ENCODE measurements at regions of chr5 and their contacts with region 1.

Region 1: DNA sequence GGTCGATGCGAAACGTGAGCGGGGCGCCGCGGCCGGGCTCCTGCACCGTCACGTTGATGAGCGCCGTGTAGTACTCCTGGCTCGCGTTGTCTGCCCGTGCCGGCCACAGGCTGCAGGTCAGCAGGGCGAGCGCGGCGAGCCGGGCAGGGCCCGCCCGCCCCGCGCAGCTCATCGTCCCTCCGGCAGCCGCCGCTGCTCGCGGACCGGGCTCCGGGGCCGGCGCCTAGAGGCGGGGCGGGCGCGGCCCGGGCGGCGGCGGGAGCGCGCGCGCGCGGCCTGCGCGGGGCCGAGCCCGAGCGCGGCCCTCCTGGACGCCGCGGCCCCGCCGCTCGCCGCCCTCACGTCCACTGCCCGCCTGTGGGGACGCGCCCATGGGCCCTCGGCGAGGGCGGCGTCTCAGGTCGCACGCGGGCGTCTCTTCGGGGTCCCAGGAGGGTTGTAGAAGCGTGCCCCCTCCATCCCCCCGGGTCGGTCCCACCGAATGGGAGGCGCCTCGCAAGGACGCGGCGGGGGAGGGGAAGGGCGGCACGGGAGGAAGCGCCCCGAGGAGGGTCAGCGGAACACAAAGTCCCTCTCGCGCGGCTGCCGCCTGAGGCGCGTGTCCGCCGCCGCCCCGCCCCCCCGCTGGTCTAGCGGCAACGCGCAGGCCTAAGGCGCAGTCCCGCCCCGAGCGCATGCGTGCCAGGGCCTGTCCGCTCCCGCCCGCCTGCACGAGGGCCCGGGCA is at the start of gene RNF130:
- DNase-seq: peak; percentile 93 to 96
- ATAC-seq: peak; percentile 93 to 98 (median 98)
- H3K4me3 ChIP-seq: peak within 1 kb of the TSS; percentile 71 to 100 (median 94)
- H3K27ac ChIP-seq: peak within 1 kb of the TSS; percentile 92 to 100 (median 97)
- H3K4me1 ChIP-seq: peaks cover 0 to 40% (median 17%) of the 10 kb centered on the region in 9 donors
- H3K27me3 ChIP-seq: no peaks in the 10 kb centered on the region
- CTCF ChIP-seq: peak in 1 of 9 donors; percentile 2
- total RNA-seq, gene RNF130: 25.8 to 55.8 (median 34.5) TPM

Region 2: DNA sequence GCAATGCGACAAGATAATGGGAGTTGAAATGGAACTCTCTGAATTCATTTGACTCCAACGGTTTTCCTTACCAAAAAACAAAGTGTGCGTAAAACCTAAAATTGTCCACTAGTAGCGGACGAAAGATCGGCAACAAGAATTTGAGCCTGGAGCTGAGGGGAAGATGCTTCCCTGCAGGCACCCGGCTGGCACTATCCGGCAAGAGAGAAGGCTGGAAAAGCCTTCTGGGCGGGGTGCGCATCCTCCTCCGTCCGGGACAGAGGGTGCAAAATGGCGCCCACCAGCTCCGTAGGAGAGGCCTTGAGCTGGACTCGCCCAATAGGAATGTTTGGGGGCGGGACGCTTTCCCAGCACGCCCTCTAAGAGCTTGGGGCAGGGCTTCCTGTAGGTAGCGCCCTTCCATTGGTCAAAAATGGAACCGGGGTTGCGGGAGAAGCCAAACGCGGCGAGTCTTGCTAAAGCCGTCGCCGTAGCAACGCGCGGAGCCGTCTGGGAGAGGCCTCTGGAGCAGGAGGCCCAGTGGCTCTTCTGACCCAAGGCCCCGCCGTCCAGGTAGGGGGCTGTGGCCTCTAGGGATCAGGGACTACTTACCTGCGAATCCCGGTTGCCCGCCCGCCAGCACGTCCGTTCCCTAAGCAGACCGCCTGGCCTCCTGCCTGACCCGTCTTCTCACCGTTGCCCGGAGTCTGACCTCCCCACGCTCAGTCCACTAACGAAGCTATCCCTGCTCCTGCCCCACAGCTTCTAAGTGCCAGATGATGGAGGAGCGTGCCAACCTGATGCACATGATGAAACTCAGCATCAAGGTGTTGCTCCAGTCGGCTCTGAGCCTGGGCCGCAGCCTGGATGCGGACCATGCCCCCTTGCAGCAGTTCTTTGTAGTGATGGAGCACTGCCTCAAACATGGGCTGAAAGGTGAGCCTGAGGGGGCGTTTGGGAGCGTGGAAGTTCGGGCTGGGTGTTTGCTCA is 512.1 kb before region 1 on chr5:
- intact Hi-C with region 1: loop called in 1 of 10 experiments (anchors 5 kb)
- DNase-seq: peak; percentile 95 to 99
- ATAC-seq: peak; percentile 99 to 100 (median 100)
- H3K4me3 ChIP-seq: peak overlapping the region in 9 of 10 donors; percentile 48 to 75 (median 61)
- H3K27ac ChIP-seq: peak overlapping the region; percentile 2 to 90 (median 85)
- H3K4me1 ChIP-seq: peaks cover 4 to 21% (median 13%) of the 10 kb centered on the region in 9 donors
- H3K27me3 ChIP-seq: no peaks in the 10 kb centered on the region
- CTCF ChIP-seq: peak in 2 of 9 donors; percentile 16 to 36

Region 3: GRCh38 chr5:179986328-179986727 is 85.4 kb before region 1 on chr5:
- intact Hi-C with region 1: loop called in 2 of 10 experiments (anchors 5 to 10 kb)
- DNase-seq: no peak
- ATAC-seq: peak in 7 of 8 donors; percentile 17 to 91 (median 81)
- H3K4me3 ChIP-seq: no peak overlapping the region
- H3K27ac ChIP-seq: no peak overlapping the region
- H3K4me1 ChIP-seq: no peaks in the 10 kb centered on the region
- H3K27me3 ChIP-seq: no peaks in the 10 kb centered on the region
- CTCF ChIP-seq: peak in 7 of 9 donors; percentile 13 to 57 (median 34)

Region 4: GRCh38 chr5:180007582-180007981 is 64.1 kb before region 1 on chr5:
- intact Hi-C with region 1: loop called in 1 of 10 experiments (anchors 5 kb)
- DNase-seq: peak in 1 of 2 donors; percentile 22
- ATAC-seq: peak; percentile 71 to 97 (median 91)
- H3K4me3 ChIP-seq: no peak overlapping the region
- H3K27ac ChIP-seq: peak overlapping the region in 7 of 10 donors; percentile 27 to 78 (median 37)
- H3K4me1 ChIP-seq: peaks cover 0 to 30% (median 17%) of the 10 kb centered on the region in 9 donors
- H3K27me3 ChIP-seq: no peaks in the 10 kb centered on the region
- CTCF ChIP-seq: no peak

Region 5: DNA sequence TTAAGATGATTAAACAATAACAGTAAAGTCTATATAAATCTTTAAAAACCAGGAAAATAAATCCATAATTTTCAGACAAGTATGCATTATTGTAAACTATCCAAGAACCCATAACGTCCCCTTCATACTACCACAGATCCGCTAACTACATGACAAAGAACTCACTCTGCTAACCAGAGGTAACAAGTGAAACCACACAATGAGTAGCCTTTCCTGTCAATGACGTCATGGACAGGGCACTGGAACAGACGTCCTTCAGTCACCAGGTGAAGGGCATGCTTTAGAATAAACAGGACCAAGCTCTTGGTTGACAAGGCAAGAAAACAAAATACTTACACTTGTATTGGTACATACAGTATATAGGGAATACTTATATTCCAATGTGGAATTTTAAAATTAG is 45.4 kb before region 1 on chr5:
- intact Hi-C with region 1: loop called in 1 of 10 experiments (anchors 5 kb)
- DNase-seq: peak in 1 of 2 donors; percentile 35
- ATAC-seq: peak; percentile 58 to 98 (median 90)
- H3K4me3 ChIP-seq: no peak overlapping the region
- H3K27ac ChIP-seq: peak overlapping the region in 4 of 10 donors; percentile 22 to 65 (median 30)
- H3K4me1 ChIP-seq: peaks cover 0 to 39% (median 6%) of the 10 kb centered on the region in 9 donors
- H3K27me3 ChIP-seq: no peaks in the 10 kb centered on the region
- CTCF ChIP-seq: no peak

Region 6: DNA sequence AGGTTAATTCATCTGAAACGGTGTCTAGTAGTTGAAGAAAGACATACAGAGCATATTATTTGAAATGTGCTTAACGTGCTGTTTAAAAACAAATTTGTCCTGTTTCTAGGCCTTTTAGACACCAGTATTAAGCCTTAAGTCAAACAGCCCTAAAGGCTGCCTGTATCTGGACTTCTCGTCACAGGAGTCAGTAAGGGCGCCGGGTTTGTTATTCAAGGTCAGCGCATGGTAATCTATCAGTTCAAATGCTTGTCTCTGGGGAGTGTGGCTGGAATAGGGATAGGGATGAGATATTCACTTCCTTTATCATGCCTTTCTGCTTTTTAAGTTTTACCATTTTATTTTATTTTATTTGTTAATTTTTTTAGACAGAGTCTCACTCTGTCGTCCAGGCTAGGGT is 413.1 kb after region 1 on chr5:
- intact Hi-C with region 1: no loop called
- DNase-seq: no peak
- ATAC-seq: peak in 1 of 8 donors; percentile 52
- H3K4me3 ChIP-seq: no peak overlapping the region
- H3K27ac ChIP-seq: peak overlapping the region in 3 of 10 donors; percentile 9 to 43 (median 18)
- H3K4me1 ChIP-seq: no peaks in the 10 kb centered on the region
- H3K27me3 ChIP-seq: no peaks in the 10 kb centered on the region
- CTCF ChIP-seq: no peak

Measured in heart right ventricle (tissue), 16 donors.